Calu3 (cell line): ENCODE measurements at regions of chr2 and their contacts with region 1.

Region 1: GRCh38 chr2:224492531-224492930 is 90.6 kb upstream of the FAM124B start:
- DNase-seq: no peak
- H3K4me3 Mint-ChIP-seq: no peak overlapping the region
- H3K27ac Mint-ChIP-seq: peak overlapping the region; percentile 31
- H3K4me1 Mint-ChIP-seq: peaks cover 38% of the 10 kb centered on the region
- H3K27me3 Mint-ChIP-seq: no peaks in the 10 kb centered on the region
- CTCF ChIP-seq: no peak

Region 2: GRCh38 chr2:224449212-224450147 is 43.1 kb before region 1 on chr2:
- CTCF ChIA-PET with region 1: no interaction called
- intact Hi-C with region 1: no loop called
- DNase-seq: peak; percentile 28
- H3K4me3 Mint-ChIP-seq: no peak overlapping the region
- H3K27ac Mint-ChIP-seq: no peak overlapping the region
- H3K4me1 Mint-ChIP-seq: no peaks in the 10 kb centered on the region
- H3K27me3 Mint-ChIP-seq: no peaks in the 10 kb centered on the region
- CTCF ChIP-seq: peak; percentile 62

Region 3: GRCh38 chr2:224507789-224508188 is 15.3 kb after region 1 on chr2:
- CTCF ChIA-PET with region 1: interaction called, 10 read pairs
- intact Hi-C with region 1: no loop called
- DNase-seq: no peak
- H3K4me3 Mint-ChIP-seq: no peak overlapping the region
- H3K27ac Mint-ChIP-seq: no peak overlapping the region
- H3K4me1 Mint-ChIP-seq: no peaks in the 10 kb centered on the region
- H3K27me3 Mint-ChIP-seq: no peaks in the 10 kb centered on the region
- CTCF ChIP-seq: no peak

Region 4: GRCh38 chr2:224520064-224520463 is 27.5 kb after region 1 on chr2:
- CTCF ChIA-PET with region 1: no interaction called
- intact Hi-C with region 1: loop called (anchors 5 kb)
- DNase-seq: no peak
- H3K4me3 Mint-ChIP-seq: no peak overlapping the region
- H3K27ac Mint-ChIP-seq: no peak overlapping the region
- H3K4me1 Mint-ChIP-seq: peaks cover 26% of the 10 kb centered on the region
- H3K27me3 Mint-ChIP-seq: no peaks in the 10 kb centered on the region
- CTCF ChIP-seq: no peak

Region 5: DNA sequence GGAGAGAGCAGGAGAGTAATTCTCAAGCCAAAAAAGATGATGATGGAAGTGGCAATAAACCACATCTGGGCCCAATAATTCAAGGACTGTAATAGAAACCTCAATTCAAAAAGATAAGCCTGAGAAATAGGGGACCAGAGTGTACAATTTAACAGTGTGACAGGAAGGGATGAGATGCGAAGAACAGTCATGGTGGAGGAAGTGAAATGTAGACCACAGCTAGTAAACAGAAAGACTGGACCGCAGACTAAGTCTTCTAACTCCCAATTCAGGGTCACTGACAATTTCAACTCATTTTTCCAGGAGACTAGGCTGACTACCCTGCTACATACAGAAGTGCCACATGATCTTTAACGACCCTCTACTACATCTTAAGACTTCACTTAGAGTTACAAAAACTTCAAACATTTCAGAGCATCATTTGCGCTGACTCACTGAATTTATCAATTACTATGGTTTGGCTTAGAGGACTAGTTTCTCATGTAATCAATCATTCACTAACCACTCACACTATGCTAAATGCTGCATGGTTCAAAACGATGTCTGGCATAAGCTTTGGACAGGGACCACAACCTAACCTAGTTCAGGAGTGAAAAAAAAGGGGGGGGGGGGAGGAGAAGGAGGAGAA is 83.7 kb after region 1 on chr2:
- CTCF ChIA-PET with region 1: no interaction called
- intact Hi-C with region 1: loop called (anchors 5 kb)
- DNase-seq: no peak
- H3K4me3 Mint-ChIP-seq: no peak overlapping the region
- H3K27ac Mint-ChIP-seq: peak overlapping the region; percentile 4
- H3K4me1 Mint-ChIP-seq: peaks cover 52% of the 10 kb centered on the region
- H3K27me3 Mint-ChIP-seq: no peaks in the 10 kb centered on the region
- CTCF ChIP-seq: no peak

Region 6: GRCh38 chr2:226325526-226325925 is 1833.0 kb after region 1 on chr2:
- CTCF ChIA-PET with region 1: no interaction called
- intact Hi-C with region 1: no loop called
- DNase-seq: no peak
- H3K4me3 Mint-ChIP-seq: no peak overlapping the region
- H3K27ac Mint-ChIP-seq: no peak overlapping the region
- H3K4me1 Mint-ChIP-seq: no peaks in the 10 kb centered on the region
- H3K27me3 Mint-ChIP-seq: no peaks in the 10 kb centered on the region
- CTCF ChIP-seq: no peak